ENCODE measurements at regions of chr11 and their contacts with region 1.

Region 1: DNA sequence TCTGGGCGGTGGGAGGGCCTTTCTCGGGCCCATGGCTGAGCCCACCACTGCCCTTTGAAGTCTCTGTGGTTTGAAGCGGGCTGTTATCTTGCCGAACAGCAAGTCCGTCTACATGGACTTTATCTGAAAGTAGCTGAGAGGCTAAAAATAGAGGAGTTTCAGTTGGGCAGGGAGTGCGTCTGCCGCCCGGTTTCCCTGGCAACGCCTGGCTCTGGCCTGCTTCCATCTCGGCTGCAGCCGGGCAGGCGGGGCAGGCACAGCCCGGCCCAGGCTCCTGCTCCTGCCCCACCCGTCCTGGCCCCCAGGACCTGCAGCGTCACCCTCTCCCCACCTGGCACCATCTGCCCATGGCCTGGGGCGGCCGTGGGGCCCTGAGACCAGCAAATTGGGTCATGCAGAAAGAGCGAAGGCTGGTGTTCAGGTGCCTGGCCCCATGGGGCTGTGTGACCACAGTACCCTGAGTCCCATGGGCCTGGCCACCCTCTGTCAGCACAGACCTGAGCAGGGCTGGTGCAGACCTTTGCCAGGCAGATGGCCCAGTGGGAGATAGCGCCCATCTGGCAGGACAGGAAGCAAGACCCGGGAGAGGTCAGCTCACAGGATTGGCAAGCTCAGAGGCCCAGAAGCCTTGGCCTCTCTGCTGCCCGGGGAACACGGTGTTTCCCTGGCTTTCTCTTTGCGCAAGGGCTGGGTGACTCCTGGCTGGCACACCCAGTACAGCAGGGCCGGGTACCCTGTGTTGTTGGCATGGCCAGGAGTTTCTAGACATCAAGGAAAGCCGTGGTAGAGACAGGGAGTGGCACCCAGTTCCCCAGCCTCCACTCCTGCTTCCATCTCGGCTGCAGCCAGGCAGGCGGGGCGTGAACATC is 79.1 kb upstream of the KCNQ1OT1 start:
- DNase-seq: peak; percentile 89 to 95
- ATAC-seq: peak; percentile 94 to 96
- H3K4me3 ChIP-seq: peak overlapping the region; percentile 24 to 51 (median 42)
- H3K27ac ChIP-seq: peak overlapping the region; percentile 82 to 96 (median 87)
- H3K4me1 ChIP-seq: peaks cover 24 to 27% of the 10 kb centered on the region in 2 donors
- H3K27me3 ChIP-seq: no peaks in the 10 kb centered on the region
- CTCF ChIP-seq: peak; percentile 28 to 44 (median 41)
- POLR2A ChIP-seq: no peak

Region 2: GRCh38 chr11:2325719-2326118 is 453.1 kb before region 1 on chr11:
- in situ Hi-C with region 1: no loop called
- intact Hi-C with region 1: loop called (anchors 10 kb)
- DNase-seq: peak; percentile 81 to 87
- ATAC-seq: peak; percentile 100
- H3K4me3 ChIP-seq: no peak overlapping the region
- H3K27ac ChIP-seq: peak overlapping the region; percentile 61 to 78 (median 71)
- H3K4me1 ChIP-seq: peaks cover 4 to 5% of the 10 kb centered on the region in 2 donors
- H3K27me3 ChIP-seq: no peaks in the 10 kb centered on the region
- CTCF ChIP-seq: no peak
- POLR2A ChIP-seq: no peak

Region 3: DNA sequence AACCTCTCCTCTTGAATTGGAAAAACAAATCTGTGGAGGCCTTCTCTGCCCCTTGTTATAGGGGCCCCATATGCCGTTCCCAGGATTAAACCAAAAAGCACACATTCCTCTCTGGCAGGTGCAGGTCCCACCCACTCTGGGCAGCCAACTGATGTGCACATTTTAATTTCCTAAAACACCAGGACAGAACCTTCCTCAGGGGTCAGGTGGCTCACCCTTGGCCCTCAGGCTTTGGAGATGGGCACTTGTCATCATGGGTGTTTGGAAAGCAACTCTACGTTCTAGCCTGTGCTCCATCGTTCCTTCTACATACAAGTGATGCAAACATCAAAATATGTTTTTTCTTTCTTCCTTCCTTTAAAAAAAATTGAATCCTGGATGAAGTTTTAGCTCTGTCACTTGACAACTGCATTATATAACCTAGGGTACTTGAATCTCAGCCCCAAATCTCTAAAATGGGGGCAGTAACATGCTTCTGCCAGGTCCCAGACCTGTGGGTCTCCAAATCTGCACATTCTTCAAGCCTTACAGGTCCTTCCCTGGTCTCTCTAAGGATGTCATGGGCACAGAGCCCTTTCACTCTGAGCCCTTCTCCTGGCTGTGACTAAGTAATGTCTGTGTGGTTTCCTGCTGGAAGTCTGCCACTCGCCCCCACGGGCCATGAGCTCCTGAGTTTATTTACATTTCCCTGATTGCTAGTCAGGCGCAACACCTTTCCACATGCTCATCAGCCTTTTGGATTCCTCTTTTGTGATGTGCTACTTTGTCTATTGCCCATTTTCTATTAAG is 122.8 kb before region 1 on chr11:
- in situ Hi-C with region 1: no loop called
- intact Hi-C with region 1: loop called (anchors 10 kb)
- DNase-seq: no peak
- ATAC-seq: no peak
- H3K4me3 ChIP-seq: no peak overlapping the region
- H3K27ac ChIP-seq: no peak overlapping the region
- H3K4me1 ChIP-seq: peaks cover 11 to 18% of the 10 kb centered on the region in 2 donors
- H3K27me3 ChIP-seq: no peaks in the 10 kb centered on the region
- CTCF ChIP-seq: no peak
- POLR2A ChIP-seq: no peak

Region 4: GRCh38 chr11:2699531-2700414 is 79.1 kb before region 1 on chr11 and contains the start of gene KCNQ1OT1:
- in situ Hi-C with region 1: no loop called
- intact Hi-C with region 1: loop called (anchors 1 kb)
- DNase-seq: peak; percentile 89 to 94
- ATAC-seq: peak; percentile 79 to 83
- H3K4me3 ChIP-seq: peak within 1 kb of the TSS; percentile 73 to 91 (median 78)
- H3K27ac ChIP-seq: peak within 1 kb of the TSS; percentile 89 to 97 (median 92)
- H3K4me1 ChIP-seq: peaks cover 19 to 21% of the 10 kb centered on the region in 2 donors
- H3K27me3 ChIP-seq: no peaks in the 10 kb centered on the region
- CTCF ChIP-seq: no peak
- POLR2A ChIP-seq: peak; percentile 91 to 92
- total RNA-seq, gene KCNQ1OT1: 0.16 to 0.61 (median 0.30) TPM

Region 5: DNA sequence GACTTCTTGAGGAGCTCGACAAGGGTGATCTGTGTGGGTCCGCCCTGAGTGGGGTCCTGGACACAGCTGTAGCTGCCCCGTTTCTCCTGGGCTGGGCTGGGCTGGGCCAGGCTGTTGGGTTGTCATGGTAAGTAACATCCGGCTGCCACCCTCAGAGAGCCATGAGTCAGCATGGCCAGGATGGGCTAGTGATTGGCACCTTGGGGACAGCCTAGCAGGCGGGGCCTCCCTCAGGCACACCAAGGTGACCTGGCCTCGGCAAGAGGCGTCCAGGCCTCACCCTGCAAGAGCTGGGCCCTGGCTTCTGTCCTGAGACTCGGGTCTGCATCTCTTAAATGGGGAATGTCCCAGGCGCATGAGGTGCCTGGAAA is 161.7 kb after region 1 on chr11:
- in situ Hi-C with region 1: no loop called
- intact Hi-C with region 1: no loop called
- DNase-seq: peak in 1 of 2 donors; percentile 53
- ATAC-seq: peak; percentile 11 to 40
- H3K4me3 ChIP-seq: no peak overlapping the region
- H3K27ac ChIP-seq: no peak overlapping the region
- H3K4me1 ChIP-seq: peaks cover 5 to 17% of the 10 kb centered on the region in 2 donors
- H3K27me3 ChIP-seq: no peaks in the 10 kb centered on the region
- CTCF ChIP-seq: no peak
- POLR2A ChIP-seq: no peak

Measured in gastrocnemius medialis (tissue), 4 donors.